Gastrocnemius medialis (tissue), 4 donors: ENCODE measurements at regions of chr5 and their contacts with region 1.

Region 1: GRCh38 chr5:134370871-134371833 is at the start of gene UBE2B:
- DNase-seq: peak; percentile 99
- ATAC-seq: peak; percentile 89 to 92
- H3K4me3 ChIP-seq: peak within 1 kb of the TSS; percentile 92 to 98 (median 95)
- H3K27ac ChIP-seq: peak within 1 kb of the TSS; percentile 97 to 100 (median 98)
- H3K4me1 ChIP-seq: peaks cover 57 to 59% of the 10 kb centered on the region in 2 donors
- H3K27me3 ChIP-seq: no peaks in the 10 kb centered on the region
- CTCF ChIP-seq: peak in 2 of 5 experiments; percentile 57 to 65
- POLR2A ChIP-seq: peak; percentile 89
- total RNA-seq, gene UBE2B: 22.2 to 124 (median 70.3) TPM

Region 2: GRCh38 chr5:134176511-134177368 is 194.4 kb before region 1 on chr5 and contains the start of gene SKP1:
- in situ Hi-C with region 1: no loop called
- intact Hi-C with region 1: loop called (anchors 2 kb)
- DNase-seq: peak; percentile 68 to 77
- ATAC-seq: peak; percentile 72 to 76
- H3K4me3 ChIP-seq: peak within 1 kb of the TSS; percentile 96 to 99 (median 98)
- H3K27ac ChIP-seq: peak within 1 kb of the TSS; percentile 93 to 99 (median 96)
- H3K4me1 ChIP-seq: peaks cover 45 to 46% of the 10 kb centered on the region in 2 donors
- H3K27me3 ChIP-seq: no peaks in the 10 kb centered on the region
- CTCF ChIP-seq: no peak
- POLR2A ChIP-seq: peak; percentile 96 to 97
- total RNA-seq, gene SKP1: 318 to 499 (median 476) TPM

Region 3: GRCh38 chr5:134411546-134412266 is 40.6 kb after region 1 on chr5 and contains the start of gene CDKN2AIPNL:
- in situ Hi-C with region 1: no loop called
- intact Hi-C with region 1: loop called (anchors 2 kb)
- DNase-seq: peak; percentile 84 to 87
- ATAC-seq: peak; percentile 90 to 91
- H3K4me3 ChIP-seq: peak within 1 kb of the TSS; percentile 72 to 90 (median 84)
- H3K27ac ChIP-seq: peak within 1 kb of the TSS; percentile 83 to 94 (median 88)
- H3K4me1 ChIP-seq: peaks cover 25 to 32% of the 10 kb centered on the region in 2 donors
- H3K27me3 ChIP-seq: no peaks in the 10 kb centered on the region
- CTCF ChIP-seq: peak; percentile 77 to 84 (median 80)
- POLR2A ChIP-seq: peak; percentile 31 to 51
- total RNA-seq, gene CDKN2AIPNL: 23.6 to 58.5 (median 37.4) TPM

Region 4: GRCh38 chr5:134465816-134466240 is 94.7 kb after region 1 on chr5:
- in situ Hi-C with region 1: no loop called
- intact Hi-C with region 1: loop called (anchors 1 kb)
- DNase-seq: peak; percentile 82 to 93
- ATAC-seq: peak; percentile 68
- H3K4me3 ChIP-seq: peak overlapping the region; percentile 59 to 72 (median 62)
- H3K27ac ChIP-seq: peak overlapping the region; percentile 93 to 99 (median 98)
- H3K4me1 ChIP-seq: peaks cover 26 to 43% of the 10 kb centered on the region in 2 donors
- H3K27me3 ChIP-seq: no peaks in the 10 kb centered on the region
- CTCF ChIP-seq: peak in 3 of 5 experiments; percentile 15 to 27 (median 20)
- POLR2A ChIP-seq: peak; percentile 88 to 92

Region 5: DNA sequence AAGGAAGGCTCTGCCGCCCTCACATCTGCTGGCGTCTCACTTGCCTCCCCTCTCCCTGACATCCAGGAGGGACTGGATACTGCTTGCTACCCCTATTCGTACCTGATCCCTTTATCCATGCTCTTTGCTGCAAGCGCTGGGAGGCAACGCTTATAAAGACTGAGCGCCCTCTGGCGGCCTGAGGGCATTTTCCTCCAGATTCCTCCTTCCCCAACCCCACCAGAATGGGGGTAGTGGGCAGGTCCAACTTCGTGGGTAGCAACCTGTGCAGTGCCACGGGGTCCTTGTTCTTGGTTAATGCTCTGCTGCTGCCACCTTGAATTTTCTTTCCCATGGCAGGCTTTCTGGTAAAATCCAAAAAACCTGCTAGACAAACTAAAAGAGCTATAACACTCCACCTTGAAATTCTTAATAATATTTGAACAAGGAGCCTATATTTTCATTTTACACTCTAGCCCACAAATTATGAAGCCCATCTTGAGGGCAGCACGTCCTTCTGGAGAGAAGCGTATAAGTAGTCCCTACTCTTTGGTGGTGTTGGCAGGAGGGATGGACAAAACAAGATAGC is 206.7 kb after region 1 on chr5:
- in situ Hi-C with region 1: loop called in 1 of 4 experiments (anchors 10 kb)
- intact Hi-C with region 1: loop called (anchors 2 kb)
- DNase-seq: peak; percentile 31 to 69
- ATAC-seq: peak; percentile 53 to 57
- H3K4me3 ChIP-seq: no peak overlapping the region
- H3K27ac ChIP-seq: peak overlapping the region in 1 of 4 donors; percentile 7
- H3K4me1 ChIP-seq: peaks cover 27 to 38% of the 10 kb centered on the region in 2 donors
- H3K27me3 ChIP-seq: no peaks in the 10 kb centered on the region
- CTCF ChIP-seq: peak; percentile 80 to 87 (median 86)
- POLR2A ChIP-seq: no peak

Region 6: GRCh38 chr5:134648425-134649162 is 277.4 kb after region 1 on chr5 and contains the start of gene SEC24A:
- in situ Hi-C with region 1: no loop called
- intact Hi-C with region 1: loop called (anchors 1 kb)
- DNase-seq: peak; percentile 94 to 97
- ATAC-seq: peak; percentile 88
- H3K4me3 ChIP-seq: peak within 1 kb of the TSS; percentile 90 to 100 (median 94)
- H3K27ac ChIP-seq: peak within 1 kb of the TSS; percentile 98 to 100 (median 98)
- H3K4me1 ChIP-seq: peaks cover 23 to 35% of the 10 kb centered on the region in 2 donors
- H3K27me3 ChIP-seq: no peaks in the 10 kb centered on the region
- CTCF ChIP-seq: no peak
- POLR2A ChIP-seq: peak; percentile 80 to 86
- total RNA-seq, gene SEC24A: 11.4 to 18.3 (median 13.6) TPM